ENCODE measurements at regions of chr2 and their contacts with region 1.

Region 1: GRCh38 chr2:176626796-176627195 is 357.6 kb downstream of the MTX2 start:
- DNase-seq: no peak
- H3K4me3 ChIP-seq: no peak overlapping the region
- H3K27ac ChIP-seq: no peak overlapping the region
- H3K4me1 ChIP-seq: no peaks in the 10 kb centered on the region
- H3K27me3 ChIP-seq: no peaks in the 10 kb centered on the region
- CTCF ChIP-seq: no peak

Region 2: GRCh38 chr2:176364273-176364977 is 262.4 kb before region 1 on chr2:
- CTCF ChIA-PET with region 1: no interaction called
- POLR2A ChIA-PET with region 1: interaction called, 12 read pairs
- intact Hi-C with region 1: no loop called
- DNase-seq: no peak
- H3K4me3 ChIP-seq: no peak overlapping the region
- H3K27ac ChIP-seq: no peak overlapping the region
- H3K4me1 ChIP-seq: no peaks in the 10 kb centered on the region
- H3K27me3 ChIP-seq: no peaks in the 10 kb centered on the region
- CTCF ChIP-seq: no peak

Region 3: GRCh38 chr2:176669398-176670174 is 42.8 kb after region 1 on chr2:
- CTCF ChIA-PET with region 1: no interaction called
- POLR2A ChIA-PET with region 1: no interaction called
- intact Hi-C with region 1: no loop called
- DNase-seq: no peak
- H3K4me3 ChIP-seq: no peak overlapping the region
- H3K27ac ChIP-seq: no peak overlapping the region
- H3K4me1 ChIP-seq: 0 out of 2 replicates have a peak, but pooled peaks cover 6% of the 10 kb centered on the region
- H3K27me3 ChIP-seq: no peaks in the 10 kb centered on the region
- CTCF ChIP-seq: no peak

Region 4: DNA sequence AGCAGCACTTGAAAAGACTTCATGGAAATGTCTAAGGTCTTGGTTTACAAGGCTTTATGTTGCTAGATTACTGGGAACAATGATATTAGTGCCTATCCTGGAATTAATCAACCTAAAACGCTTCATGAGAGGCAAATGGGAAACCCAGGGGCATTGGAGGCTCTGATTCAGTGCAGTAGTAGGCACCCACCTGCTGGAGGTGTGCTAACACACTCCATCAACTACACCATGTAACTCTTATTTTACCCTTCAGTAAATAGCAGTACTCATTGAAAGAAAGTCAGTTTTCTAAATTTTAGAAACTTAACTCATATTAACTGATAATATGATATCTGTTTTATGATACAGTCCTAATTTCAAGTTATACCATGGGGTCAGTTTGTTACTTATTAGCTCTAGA is 568.4 kb after region 1 on chr2:
- CTCF ChIA-PET with region 1: no interaction called
- POLR2A ChIA-PET with region 1: interaction called, 13 read pairs
- intact Hi-C with region 1: no loop called
- DNase-seq: no peak
- H3K4me3 ChIP-seq: no peak overlapping the region
- H3K27ac ChIP-seq: no peak overlapping the region
- H3K4me1 ChIP-seq: no peaks in the 10 kb centered on the region
- H3K27me3 ChIP-seq: no peaks in the 10 kb centered on the region
- CTCF ChIP-seq: no peak

Region 5: DNA sequence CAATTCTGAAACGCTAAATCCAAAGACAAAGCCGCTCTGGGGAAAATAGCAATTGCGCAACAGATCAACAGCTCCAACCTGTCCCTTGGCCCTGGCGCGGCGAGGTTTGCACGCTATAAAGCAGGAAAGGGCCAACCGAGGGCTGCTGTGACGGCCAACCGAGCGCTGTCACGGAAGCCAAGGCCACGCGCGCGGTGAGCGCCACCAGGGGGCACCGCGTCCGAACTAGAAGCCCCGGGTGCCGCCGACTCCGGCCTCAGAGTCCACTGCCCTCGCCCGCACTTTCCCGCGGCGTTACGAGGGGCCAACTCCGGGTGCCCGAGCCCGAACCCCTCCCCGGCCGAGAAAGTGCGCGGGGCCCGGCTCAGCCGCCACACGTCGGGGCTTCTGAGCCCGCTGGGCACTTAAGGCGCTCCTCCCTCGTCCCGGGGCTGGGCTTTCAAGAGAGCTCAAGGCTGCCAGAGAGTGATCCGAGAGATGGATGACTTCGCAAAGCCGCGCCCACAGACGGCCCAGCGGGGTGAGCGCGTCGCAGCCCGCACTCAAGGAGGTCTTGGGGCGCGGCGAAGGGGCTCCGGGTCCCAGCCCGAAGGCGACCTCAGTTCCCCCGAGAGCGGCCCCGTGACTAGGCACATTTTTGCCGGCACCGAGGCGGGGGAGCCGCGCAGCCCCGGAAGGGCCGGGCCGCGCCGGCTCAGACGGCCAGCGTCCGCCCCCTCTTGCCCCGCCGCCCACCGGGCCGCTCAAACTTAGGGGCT is 636.8 kb after region 1 on chr2:
- CTCF ChIA-PET with region 1: no interaction called
- POLR2A ChIA-PET with region 1: no interaction called
- intact Hi-C with region 1: no loop called
- DNase-seq: peak; percentile 97 to 100
- H3K4me3 ChIP-seq: peak overlapping the region; percentile 90
- H3K27ac ChIP-seq: peak overlapping the region; percentile 97
- H3K4me1 ChIP-seq: peaks cover 50% of the 10 kb centered on the region
- H3K27me3 ChIP-seq: no peaks in the 10 kb centered on the region
- CTCF ChIP-seq: peak; percentile 92